Heart left ventricle (tissue), 16 donors: ENCODE measurements at regions of chr7 and their contacts with region 1.

Region 1: GRCh38 chr7:128869138-128869943 is 6.7 kb downstream of the ATP6V1F start:
- DNase-seq: peak; percentile 55 to 83 (median 59)
- ATAC-seq: peak; percentile 12 to 75 (median 58)
- H3K4me3 ChIP-seq: peak overlapping the region; percentile 45 to 70 (median 63)
- H3K27ac ChIP-seq: peak overlapping the region in 3 of 12 donors; percentile 15 to 55 (median 38)
- H3K4me1 ChIP-seq: peaks cover 0 to 22% (median 13%) of the 10 kb centered on the region in 12 donors
- H3K27me3 ChIP-seq: peaks cover 0 to 16% (median 0%) of the 10 kb centered on the region in 9 donors
- CTCF ChIP-seq: peak in 7 of 12 donors; percentile 9 to 46 (median 32)
- POLR2A ChIP-seq: no peak

Region 2: DNA sequence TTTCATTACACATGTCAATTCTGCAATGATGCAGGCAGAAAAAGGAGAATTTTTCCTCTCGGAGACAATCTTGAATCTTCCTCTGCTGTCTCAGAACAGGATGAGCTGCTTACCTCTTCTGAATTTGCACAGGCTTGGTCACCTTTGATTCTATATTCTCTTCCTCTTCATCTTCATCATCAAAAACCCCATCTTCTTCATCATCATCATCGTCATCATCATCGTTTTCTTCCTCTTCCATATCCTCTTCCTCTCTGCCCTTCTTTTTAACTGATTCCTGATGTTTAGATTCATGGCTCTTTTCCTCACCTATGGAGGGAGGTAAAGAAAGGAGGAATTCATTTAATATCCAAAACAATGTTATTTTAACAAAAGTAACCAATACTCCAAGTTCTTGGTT is 533.6 kb before region 1 on chr7:
- intact Hi-C with region 1: no loop called
- DNase-seq: no peak
- ATAC-seq: no peak
- H3K4me3 ChIP-seq: no peak overlapping the region
- H3K27ac ChIP-seq: no peak overlapping the region
- H3K4me1 ChIP-seq: peaks cover 0 to 2% (median 0%) of the 10 kb centered on the region in 12 donors
- H3K27me3 ChIP-seq: no peaks in the 10 kb centered on the region
- CTCF ChIP-seq: no peak
- POLR2A ChIP-seq: no peak

Region 3: DNA sequence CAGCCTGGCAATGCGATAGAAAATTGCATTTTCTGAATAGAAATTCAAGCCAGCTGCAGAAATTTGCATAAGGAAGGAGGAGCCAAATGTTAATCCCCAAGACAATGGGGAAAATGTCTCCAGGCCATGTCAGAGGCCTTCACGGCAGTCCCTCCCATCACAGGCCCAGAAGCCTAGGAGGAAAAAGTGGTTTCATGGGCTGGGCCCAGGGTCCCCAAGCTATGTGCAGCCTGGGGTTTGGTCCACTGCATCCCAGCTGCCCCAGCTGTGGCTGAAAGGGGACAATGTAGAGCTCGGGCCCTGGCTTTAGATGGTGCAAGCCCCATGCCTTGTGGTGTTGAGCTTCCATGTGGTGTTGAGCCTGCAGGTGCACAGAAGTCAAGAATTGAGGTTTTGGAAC is 207.2 kb before region 1 on chr7:
- intact Hi-C with region 1: loop called in 1 of 10 experiments (anchors 5 kb)
- DNase-seq: no peak
- ATAC-seq: no peak
- H3K4me3 ChIP-seq: no peak overlapping the region
- H3K27ac ChIP-seq: no peak overlapping the region
- H3K4me1 ChIP-seq: no peaks in the 10 kb centered on the region
- H3K27me3 ChIP-seq: no peaks in the 10 kb centered on the region
- CTCF ChIP-seq: no peak
- POLR2A ChIP-seq: no peak

Region 4: GRCh38 chr7:128710481-128710880 is 158.9 kb before region 1 on chr7:
- intact Hi-C with region 1: no loop called
- DNase-seq: no peak
- ATAC-seq: no peak
- H3K4me3 ChIP-seq: no peak overlapping the region
- H3K27ac ChIP-seq: no peak overlapping the region
- H3K4me1 ChIP-seq: peaks cover 0 to 11% (median 0%) of the 10 kb centered on the region in 12 donors
- H3K27me3 ChIP-seq: no peaks in the 10 kb centered on the region
- CTCF ChIP-seq: no peak
- POLR2A ChIP-seq: no peak

Region 5: DNA sequence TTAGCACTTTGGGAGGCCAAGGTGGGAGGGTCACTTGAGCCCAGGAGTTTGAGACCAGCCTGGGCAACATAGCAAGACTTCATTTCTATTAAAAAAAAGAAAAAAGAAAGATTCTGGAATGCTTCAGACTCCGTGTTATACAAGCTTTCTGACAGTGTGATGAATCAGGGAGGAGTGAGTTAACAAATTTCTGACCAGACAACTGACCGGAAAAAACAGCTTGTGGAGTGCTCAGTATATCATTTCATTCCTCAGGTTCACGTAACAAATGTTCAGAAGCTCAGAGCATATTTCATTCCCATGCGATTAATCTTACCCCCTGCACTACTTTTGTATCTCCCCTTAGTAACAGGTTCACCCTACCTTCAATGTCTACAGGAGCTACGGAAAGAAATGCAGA is 214.2 kb after region 1 on chr7:
- intact Hi-C with region 1: no loop called
- DNase-seq: no peak
- ATAC-seq: no peak
- H3K4me3 ChIP-seq: no peak overlapping the region
- H3K27ac ChIP-seq: no peak overlapping the region
- H3K4me1 ChIP-seq: no peaks in the 10 kb centered on the region
- H3K27me3 ChIP-seq: peaks cover 0 to 13% (median 0%) of the 10 kb centered on the region in 9 donors
- CTCF ChIP-seq: no peak
- POLR2A ChIP-seq: no peak